Thyroid gland (tissue), 4 donors: ENCODE measurements at regions of chr1 and their contacts with region 1.

Region 1: DNA sequence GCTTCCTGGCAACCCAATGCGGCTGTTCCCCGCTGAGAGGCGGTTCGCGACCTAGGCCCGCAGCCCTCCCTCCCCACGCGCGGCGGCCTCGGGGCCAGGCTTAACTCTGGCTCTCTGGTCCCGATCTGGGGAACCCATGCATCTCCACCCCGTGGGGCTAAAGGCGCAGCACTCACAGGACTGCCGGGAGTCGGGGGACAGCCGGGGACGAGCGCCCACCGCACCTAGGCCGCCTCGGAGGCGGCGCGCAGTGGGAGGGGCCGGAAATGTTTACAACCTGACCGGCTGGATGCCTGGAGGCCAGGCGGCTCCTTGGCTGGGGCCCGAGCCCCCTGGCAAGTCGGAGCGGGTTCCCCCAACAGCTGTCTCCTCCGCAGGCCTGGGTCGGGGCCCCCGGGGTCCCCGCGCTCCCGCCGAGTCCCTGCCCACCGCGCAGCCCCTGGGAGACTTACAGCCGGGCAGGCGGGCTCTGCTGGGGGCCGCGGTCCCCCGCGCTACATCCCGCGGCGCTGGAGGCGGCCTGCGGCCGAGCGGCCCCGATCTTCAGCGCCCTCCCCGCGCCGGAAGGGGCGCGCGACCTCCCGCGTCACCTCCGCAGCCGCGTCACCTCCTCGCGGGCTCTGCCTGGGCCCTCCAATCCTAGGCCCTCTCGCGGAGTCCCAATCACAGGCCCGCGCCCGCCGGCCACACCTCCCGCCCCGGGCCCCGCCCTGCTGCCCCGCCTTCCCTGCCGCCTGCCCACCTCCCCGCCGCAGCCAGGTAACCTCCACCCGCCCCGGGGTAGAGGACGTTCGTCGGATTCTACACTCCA is at the start of gene ADIPOR1:
- DNase-seq: peak; percentile 93
- H3K4me3 ChIP-seq: peak within 1 kb of the TSS; percentile 78 to 100 (median 86)
- H3K27ac ChIP-seq: peak within 1 kb of the TSS; percentile 63 to 90 (median 85)
- H3K4me1 ChIP-seq: peaks cover 11 to 25% of the 10 kb centered on the region in 2 donors
- H3K27me3 ChIP-seq: no peaks in the 10 kb centered on the region
- CTCF ChIP-seq: peak in 3 of 6 experiments; percentile 15 to 19 (median 17)
- POLR2A ChIP-seq: peak; percentile 78 to 92
- total RNA-seq, gene ADIPOR1: 76.3 to 108 (median 81.2) TPM

Region 2: DNA sequence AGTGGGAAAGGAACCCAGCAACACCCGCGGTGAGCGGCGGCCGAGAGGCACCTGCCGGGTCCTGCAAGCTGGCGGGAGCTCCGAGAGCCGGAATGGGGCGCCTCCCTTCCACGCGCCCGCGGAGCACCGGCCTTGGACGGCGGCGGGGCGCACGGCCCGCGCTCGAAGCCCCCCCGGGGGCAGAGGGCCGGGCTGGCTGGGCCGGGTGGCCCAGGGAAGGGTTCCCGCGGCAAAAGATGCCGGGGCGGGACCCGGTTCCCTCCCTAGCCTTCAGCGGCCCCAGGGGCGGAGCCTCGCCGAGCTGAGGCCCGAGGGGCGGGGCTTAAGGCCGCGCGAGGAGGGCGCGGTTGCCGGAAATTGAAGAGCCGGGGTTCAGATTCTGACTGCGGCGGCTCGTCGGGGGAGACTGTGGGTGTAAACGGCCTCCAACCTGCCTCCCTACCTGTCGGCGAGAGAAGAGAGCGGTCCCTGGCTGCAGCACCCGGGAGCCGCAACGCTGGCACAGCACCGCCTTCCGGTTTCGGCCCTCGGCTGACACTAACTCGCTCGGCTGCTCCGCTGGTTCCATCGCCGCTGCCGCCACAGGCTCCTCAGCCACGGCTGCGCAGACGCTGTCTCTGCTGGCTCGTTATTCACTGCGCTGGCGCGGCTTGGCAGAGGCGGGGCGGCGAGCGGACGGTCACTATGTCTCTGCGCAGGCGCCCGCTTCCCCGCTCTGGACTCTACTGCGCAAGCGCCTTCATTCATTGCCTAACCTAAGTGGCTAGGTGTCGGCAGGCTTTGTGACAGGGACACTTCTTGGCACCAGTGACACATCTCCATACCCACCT is 69.2 kb before region 1 on chr1 and contains the start of gene RABIF:
- intact Hi-C with region 1: loop called (anchors 10 kb)
- DNase-seq: peak; percentile 98
- H3K4me3 ChIP-seq: peak within 1 kb of the TSS; percentile 17 to 96 (median 77)
- H3K27ac ChIP-seq: peak within 1 kb of the TSS; percentile 54 to 92 (median 84)
- H3K4me1 ChIP-seq: peaks cover 7 to 12% of the 10 kb centered on the region in 2 donors
- H3K27me3 ChIP-seq: no peaks in the 10 kb centered on the region
- CTCF ChIP-seq: peak in 2 of 6 experiments; percentile 11 to 18
- POLR2A ChIP-seq: peak; percentile 55 to 86
- total RNA-seq, gene RABIF: 6.1 to 10.7 (median 7.8) TPM

Region 3: GRCh38 chr1:202923533-202923932 is 34.4 kb before region 1 on chr1:
- intact Hi-C with region 1: no loop called
- DNase-seq: no peak
- H3K4me3 ChIP-seq: no peak overlapping the region
- H3K27ac ChIP-seq: no peak overlapping the region
- H3K4me1 ChIP-seq: peaks cover 8 to 10% of the 10 kb centered on the region in 2 donors
- H3K27me3 ChIP-seq: no peaks in the 10 kb centered on the region
- CTCF ChIP-seq: no peak
- POLR2A ChIP-seq: no peak